ENCODE measurements at regions of chr15 and their contacts with region 1.

Region 1: DNA sequence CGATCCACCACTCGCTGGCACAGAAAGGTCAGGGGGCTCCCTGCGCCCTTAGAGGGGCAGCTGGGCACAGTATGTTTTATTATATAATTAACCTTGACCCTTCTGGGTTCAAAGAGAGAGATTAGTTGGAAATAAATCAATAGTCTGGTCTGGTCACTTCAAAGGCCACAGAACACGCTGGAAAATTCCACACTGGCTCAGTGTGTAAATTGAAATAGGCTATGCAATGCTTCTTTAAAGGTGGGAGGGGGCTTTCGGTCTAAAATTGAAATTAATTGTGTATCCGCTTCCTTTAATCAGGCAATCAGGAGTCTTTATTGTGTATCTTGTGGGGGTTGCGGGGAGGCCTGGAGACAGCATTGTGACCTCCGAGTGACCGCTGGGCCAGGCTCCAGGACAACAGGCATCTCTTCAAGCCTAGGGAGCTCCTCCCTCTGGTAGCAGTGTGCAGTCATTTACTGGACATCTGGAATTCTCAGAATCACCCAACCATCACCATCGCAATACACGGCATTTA is 8.0 kb downstream of the RNU5B-1 start:
- DNase-seq: no peak
- H3K4me3 ChIP-seq: no peak overlapping the region
- H3K27ac ChIP-seq: no peak overlapping the region
- H3K4me1 ChIP-seq: peaks cover 0 to 3% (median 0%) of the 10 kb centered on the region in 4 experiments; a peak in 2 of 7 replicates
- H3K27me3 ChIP-seq: no peaks in the 10 kb centered on the region
- CTCF ChIP-seq: no peak
- EP300 ChIP-seq: no peak
- POLR2A ChIP-seq: no peak
- RAD21 ChIP-seq: no peak

Region 2: GRCh38 chr15:65326117-65326526 is 13.7 kb after region 1 on chr15:
- CTCF ChIA-PET with region 1: interaction called, 10 read pairs
- POLR2A ChIA-PET with region 1: interaction called, 3 read pairs
- DNase-seq: no peak
- H3K4me3 ChIP-seq: no peak overlapping the region
- H3K27ac ChIP-seq: no peak overlapping the region
- H3K4me1 ChIP-seq: peaks cover 0 to 7% (median 1%) of the 10 kb centered on the region in 4 experiments; a peak in 4 of 7 replicates
- H3K27me3 ChIP-seq: 0 out of 7 replicates have a peak, but pooled peaks cover 0 to 3% (median 0%) of the 10 kb centered on the region in 4 experiments
- CTCF ChIP-seq: no peak
- EP300 ChIP-seq: no peak
- POLR2A ChIP-seq: no peak
- RAD21 ChIP-seq: no peak

Region 3: GRCh38 chr15:65460741-65461347 is 148.4 kb after region 1 on chr15:
- CTCF ChIA-PET with region 1: no interaction called
- POLR2A ChIA-PET with region 1: no interaction called
- DNase-seq: no peak
- H3K4me3 ChIP-seq: no peak overlapping the region
- H3K27ac ChIP-seq: no peak overlapping the region
- H3K4me1 ChIP-seq: no peaks in the 10 kb centered on the region
- H3K27me3 ChIP-seq: no peaks in the 10 kb centered on the region
- CTCF ChIP-seq: no peak
- EP300 ChIP-seq: no peak
- POLR2A ChIP-seq: no peak
- RAD21 ChIP-seq: no peak

Measured in H1 (cell line).